Calu3 (cell line): ENCODE measurements at regions of chr3 and their contacts with region 1.

Region 1: DNA sequence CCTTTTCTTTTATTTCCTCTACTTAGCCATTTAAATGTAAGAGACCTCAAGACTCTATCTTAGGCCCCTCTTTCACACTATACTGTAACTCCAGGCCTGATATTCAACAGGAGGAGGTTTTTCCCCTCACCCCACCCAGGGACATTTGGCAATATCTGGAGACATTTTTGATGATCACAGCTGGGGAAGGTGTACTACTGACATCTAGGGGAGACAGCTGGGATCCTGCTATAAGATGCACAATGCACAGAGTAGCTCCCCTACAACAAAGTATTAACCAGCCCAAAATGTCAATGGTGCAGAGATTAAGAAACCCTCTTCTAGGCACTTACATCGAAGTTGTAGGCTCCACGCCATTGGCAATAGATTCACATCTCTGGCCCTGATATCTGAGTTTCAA is 517.5 kb upstream of the UBE2E2 start:
- DNase-seq: peak; percentile 29
- H3K4me3 Mint-ChIP-seq: no peak overlapping the region
- H3K27ac Mint-ChIP-seq: no peak overlapping the region
- H3K4me1 Mint-ChIP-seq: no peaks in the 10 kb centered on the region
- H3K27me3 Mint-ChIP-seq: no peaks in the 10 kb centered on the region
- CTCF ChIP-seq: no peak

Region 2: DNA sequence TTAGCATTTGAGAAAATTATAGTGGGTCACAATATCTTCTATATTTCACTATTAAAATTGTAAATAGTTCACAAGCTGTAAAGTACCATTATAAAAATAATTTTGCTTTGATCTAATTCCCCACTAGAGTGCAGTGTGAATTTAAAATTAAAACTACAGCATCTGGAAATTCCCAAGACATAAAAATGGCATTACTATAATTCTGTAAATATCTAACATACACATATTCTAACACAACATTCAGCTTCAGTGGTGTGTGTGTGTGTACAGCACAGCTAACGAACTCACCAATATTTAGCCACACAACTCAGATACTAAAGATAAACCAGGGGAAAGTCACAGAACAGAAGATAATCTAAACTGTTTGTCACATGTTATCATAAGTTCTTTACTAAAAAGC is 509.6 kb before region 1 on chr3:
- CTCF ChIA-PET with region 1: no interaction called
- intact Hi-C with region 1: loop called (anchors 2 kb)
- DNase-seq: no peak
- H3K4me3 Mint-ChIP-seq: no peak overlapping the region
- H3K27ac Mint-ChIP-seq: no peak overlapping the region
- H3K4me1 Mint-ChIP-seq: no peaks in the 10 kb centered on the region
- H3K27me3 Mint-ChIP-seq: no peaks in the 10 kb centered on the region
- CTCF ChIP-seq: no peak